HEK293T (cell line): ENCODE measurements at regions of chr13 and their contacts with region 1.

Region 1: GRCh38 chr13:52405767-52406494 is at the start of gene THSD1:
- DNase-seq: peak; percentile 46

Region 2: GRCh38 chr13:52450012-52450792 is 44.3 kb after region 1 on chr13 and contains the start of gene VPS36:
- CTCF ChIA-PET with region 1: interaction called, 11 read pairs
- POLR2A ChIA-PET with region 1: no interaction called
- DNase-seq: peak; percentile 89